Naive thymus-derived CD4-positive, alpha-beta T cell (primary cell): ENCODE measurements at regions of chr22 and their contacts with region 1.

Region 1: GRCh38 chr22:17095538-17095937 is 10.7 kb downstream of the IL17RA start:
- DNase-seq: no peak
- ATAC-seq: no peak
- H3K4me3 ChIP-seq: no peak overlapping the region
- H3K4me3 Mint-ChIP-seq: peak overlapping the region in 6 of 10 donors; percentile 18 to 87 (median 42)
- H3K27ac ChIP-seq: peak overlapping the region; percentile 16
- H3K27ac Mint-ChIP-seq: peak overlapping the region in 8 of 9 donors; percentile 23 to 94 (median 75)
- H3K4me1 ChIP-seq: peaks cover 40 to 82% of the 10 kb centered on the region in 2 donors
- H3K4me1 Mint-ChIP-seq: peaks cover 77 to 100% (median 93%) of the 10 kb centered on the region in 7 donors
- H3K27me3 ChIP-seq: no peaks in the 10 kb centered on the region
- H3K27me3 Mint-ChIP-seq: no peaks in the 10 kb centered on the region

Region 2: GRCh38 chr22:17047656-17048055 is 47.9 kb before region 1 on chr22:
- CTCF ChIA-PET with region 1: no interaction called
- POLR2A ChIA-PET with region 1: no interaction called
- intact Hi-C with region 1: no loop called
- DNase-seq: no peak
- ATAC-seq: peak; percentile 16
- H3K4me3 ChIP-seq: no peak overlapping the region
- H3K4me3 Mint-ChIP-seq: no peak overlapping the region
- H3K27ac ChIP-seq: no peak overlapping the region
- H3K27ac Mint-ChIP-seq: peak overlapping the region in 1 of 9 donors; percentile 32
- H3K4me1 ChIP-seq: no peaks in the 10 kb centered on the region
- H3K4me1 Mint-ChIP-seq: peaks cover 0 to 2% (median 0%) of the 10 kb centered on the region in 7 donors
- H3K27me3 ChIP-seq: no peaks in the 10 kb centered on the region
- H3K27me3 Mint-ChIP-seq: peaks cover 0 to 6% (median 0%) of the 10 kb centered on the region in 5 donors

Region 3: GRCh38 chr22:17106785-17107546 is 11.4 kb after region 1 on chr22:
- CTCF ChIA-PET with region 1: interaction called, 8 read pairs
- POLR2A ChIA-PET with region 1: interaction called, 114 read pairs
- intact Hi-C with region 1: loop called (anchors 1 kb)
- DNase-seq: peak in 5 of 9 donors; percentile 22 to 38 (median 24)
- ATAC-seq: peak; percentile 77
- H3K4me3 ChIP-seq: peak overlapping the region; percentile 18
- H3K4me3 Mint-ChIP-seq: peak overlapping the region; percentile 70 to 87 (median 82)
- H3K27ac ChIP-seq: peak overlapping the region; percentile 66
- H3K27ac Mint-ChIP-seq: peak overlapping the region; percentile 82 to 96 (median 90)
- H3K4me1 ChIP-seq: peaks cover 4 to 46% of the 10 kb centered on the region in 2 donors
- H3K4me1 Mint-ChIP-seq: peaks cover 37 to 77% (median 60%) of the 10 kb centered on the region in 7 donors
- H3K27me3 ChIP-seq: no peaks in the 10 kb centered on the region
- H3K27me3 Mint-ChIP-seq: no peaks in the 10 kb centered on the region